ENCODE measurements at regions of chr13 and their contacts with region 1.

Region 1: DNA sequence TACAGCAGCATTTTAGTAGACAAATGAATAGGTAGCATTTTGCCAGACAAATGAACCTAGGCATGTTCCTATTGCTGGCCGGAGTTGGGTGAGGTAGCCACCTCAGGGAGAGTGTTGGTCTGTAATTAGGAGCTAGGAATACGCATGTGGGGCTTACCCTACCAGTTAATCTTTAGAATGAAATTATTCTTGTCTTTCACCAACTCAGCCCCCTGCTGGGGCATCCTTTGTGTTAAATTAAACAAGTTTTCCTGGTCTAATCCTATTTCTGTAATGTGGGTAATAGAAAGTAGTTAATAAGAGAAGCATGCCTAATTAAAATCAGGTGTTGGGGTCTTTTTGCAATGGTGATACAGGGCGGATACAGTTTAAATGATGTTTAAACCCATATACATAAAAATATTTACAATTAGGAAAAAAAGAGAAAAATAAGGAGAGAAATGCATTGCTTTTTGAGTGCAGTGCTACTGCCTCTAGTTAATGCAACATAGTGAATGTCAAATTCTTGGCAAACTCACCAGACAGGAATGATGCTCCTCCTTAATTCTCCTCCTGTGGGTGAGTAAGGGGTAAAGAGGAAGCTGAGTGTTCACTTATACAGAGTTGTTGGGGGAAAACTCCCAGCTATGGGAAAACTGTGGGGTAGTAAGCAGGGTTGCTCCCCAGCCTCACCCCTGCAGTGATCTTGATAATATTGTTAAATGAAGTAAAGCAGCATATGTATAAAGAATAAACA is 276.4 kb upstream of the EDNRB start:
- DNase-seq: no peak
- H3K4me3 ChIP-seq: no peak overlapping the region
- H3K27ac ChIP-seq: no peak overlapping the region
- H3K4me1 ChIP-seq: no peaks in the 10 kb centered on the region
- H3K27me3 ChIP-seq: no peaks in the 10 kb centered on the region
- CTCF ChIP-seq: no peak

Region 2: DNA sequence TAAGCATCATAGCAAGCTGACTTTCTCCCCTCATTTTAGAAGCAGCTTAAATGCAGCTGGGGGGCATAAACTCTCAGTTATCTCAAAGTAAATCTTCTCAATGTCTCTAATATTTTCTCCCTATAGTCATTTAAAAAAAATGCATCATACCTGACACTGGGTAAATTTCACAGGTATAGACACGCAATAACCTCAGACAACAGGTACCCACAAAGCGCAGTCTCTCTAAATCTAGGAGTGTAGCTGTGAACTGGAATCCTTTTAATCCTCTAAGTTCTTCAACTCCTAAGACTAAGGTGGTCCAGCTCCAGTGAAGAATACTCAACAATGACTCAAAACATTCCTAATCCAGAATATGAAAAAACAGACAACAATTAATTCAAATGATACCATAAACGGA is 1009.4 kb before region 1 on chr13:
- CTCF ChIA-PET with region 1: no interaction called
- dilution Hi-C with region 1: no loop called
- in situ Hi-C with region 1: no loop called
- intact Hi-C with region 1: no loop called
- DNase-seq: peak; percentile 66
- H3K4me3 ChIP-seq: no peak overlapping the region
- H3K27ac ChIP-seq: peak overlapping the region; percentile 48
- H3K4me1 ChIP-seq: peaks cover 24% of the 10 kb centered on the region
- H3K27me3 ChIP-seq: no peaks in the 10 kb centered on the region
- CTCF ChIP-seq: no peak

Region 3: DNA sequence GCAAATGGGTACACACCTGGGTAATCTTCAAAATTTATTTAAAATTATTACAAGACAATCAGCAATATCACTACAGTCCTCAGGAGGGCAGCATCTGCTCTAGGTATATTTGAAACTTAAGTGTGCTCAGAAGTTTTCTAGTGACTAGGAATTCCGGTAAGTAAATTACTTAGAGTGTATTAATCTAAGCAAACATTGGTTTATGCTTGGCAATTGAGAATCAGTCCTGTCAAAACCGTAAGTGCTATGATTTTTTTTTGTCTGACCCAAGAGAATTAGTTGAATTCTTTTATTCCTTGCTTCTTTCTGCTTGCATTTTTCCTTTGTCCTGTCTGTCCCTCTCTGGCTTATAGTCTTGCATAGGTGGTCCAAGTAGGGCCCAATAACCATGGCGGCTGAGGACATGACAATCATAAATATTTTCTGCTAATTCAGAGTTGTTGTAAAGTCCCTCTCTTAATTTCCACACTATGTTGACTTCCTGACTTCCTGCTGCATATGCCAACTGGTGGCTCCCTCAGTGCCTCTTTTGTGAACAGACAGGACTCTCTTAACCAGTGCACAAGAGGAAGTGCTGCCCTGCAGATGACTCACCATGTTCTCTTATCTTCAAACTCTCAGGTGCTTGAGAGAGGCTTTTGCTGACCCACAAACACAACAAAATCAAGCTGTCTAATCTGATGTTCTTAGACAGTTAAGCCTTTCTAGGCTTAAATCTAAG is 415.4 kb before region 1 on chr13:
- CTCF ChIA-PET with region 1: no interaction called
- dilution Hi-C with region 1: no loop called
- in situ Hi-C with region 1: no loop called
- intact Hi-C with region 1: loop called (anchors 5 kb)
- DNase-seq: peak; percentile 22
- H3K4me3 ChIP-seq: no peak overlapping the region
- H3K27ac ChIP-seq: no peak overlapping the region
- H3K4me1 ChIP-seq: no peaks in the 10 kb centered on the region
- H3K27me3 ChIP-seq: no peaks in the 10 kb centered on the region
- CTCF ChIP-seq: peak; percentile 55 to 64

Measured in mammary epithelial cell (primary cell).